ENCODE measurements at regions of chr9 and their contacts with region 1.

Region 1: DNA sequence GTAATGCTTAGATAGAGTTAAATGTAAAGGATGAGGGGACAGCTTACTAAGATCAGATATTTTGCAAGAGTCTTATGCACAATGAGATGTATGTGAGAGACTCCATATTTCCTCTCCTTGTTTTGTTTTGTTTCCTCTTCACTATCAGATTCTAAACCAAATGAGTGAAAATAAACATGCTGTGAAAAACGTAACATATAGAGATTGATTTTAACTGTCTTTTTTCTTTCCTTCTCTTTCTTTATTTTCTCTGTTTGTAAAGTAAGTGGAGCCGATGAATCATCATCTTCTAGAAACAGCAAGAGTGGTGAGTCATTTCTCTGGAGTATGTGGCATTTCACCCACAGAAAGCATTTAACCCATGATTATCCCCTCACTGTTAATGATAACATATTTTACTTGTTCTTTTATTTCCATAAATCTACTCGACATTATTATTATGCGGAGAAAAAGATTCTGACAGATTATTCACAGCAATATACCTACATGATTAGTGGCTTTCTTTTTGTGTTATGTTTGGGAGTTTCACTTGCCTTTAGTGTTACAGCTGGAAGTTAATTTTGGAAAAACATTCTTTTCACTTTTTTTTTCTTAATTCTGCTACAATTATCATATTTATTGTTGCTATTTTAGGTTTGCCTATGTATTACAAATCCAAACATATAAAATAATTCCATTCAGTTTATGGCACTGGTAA is 2.1 kb upstream of the ANXA1 start:
- DNase-seq: no peak
- H3K4me3 Mint-ChIP-seq: peak overlapping the region; percentile 20
- H3K27ac Mint-ChIP-seq: peak overlapping the region; percentile 76
- H3K4me1 Mint-ChIP-seq: peaks cover 63% of the 10 kb centered on the region
- H3K27me3 Mint-ChIP-seq: no peaks in the 10 kb centered on the region

Region 2: DNA sequence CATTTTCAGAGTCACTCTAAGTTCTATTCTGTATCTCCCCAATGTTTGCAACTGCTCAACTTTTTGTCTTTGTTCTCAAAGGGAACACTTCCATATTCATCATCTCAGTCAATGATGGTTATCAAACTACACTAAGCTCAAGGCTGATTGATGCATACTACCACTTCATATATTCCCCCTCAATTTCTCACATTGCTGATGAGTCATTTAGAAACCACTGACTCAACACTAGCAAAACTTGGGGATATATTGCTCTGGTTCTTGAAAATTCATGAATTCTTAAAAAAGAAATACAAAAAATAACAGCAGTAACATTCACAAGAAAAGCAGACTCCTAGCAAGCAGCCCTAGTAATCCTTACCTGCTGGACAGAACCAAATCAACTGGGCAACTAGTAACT is 1290.7 kb before region 1 on chr9:
- intact Hi-C with region 1: loop called (anchors 10 kb)
- DNase-seq: no peak
- H3K4me3 Mint-ChIP-seq: no peak overlapping the region
- H3K27ac Mint-ChIP-seq: peak overlapping the region; percentile 44
- H3K4me1 Mint-ChIP-seq: peaks cover 29% of the 10 kb centered on the region
- H3K27me3 Mint-ChIP-seq: no peaks in the 10 kb centered on the region

Region 3: GRCh38 chr9:72526901-72527800 is 622.4 kb before region 1 on chr9:
- intact Hi-C with region 1: loop called (anchors 10 kb)
- DNase-seq: peak; percentile 61
- H3K4me3 Mint-ChIP-seq: peak overlapping the region; percentile 72
- H3K27ac Mint-ChIP-seq: peak overlapping the region; percentile 94
- H3K4me1 Mint-ChIP-seq: peaks cover 43% of the 10 kb centered on the region
- H3K27me3 Mint-ChIP-seq: no peaks in the 10 kb centered on the region

Region 4: DNA sequence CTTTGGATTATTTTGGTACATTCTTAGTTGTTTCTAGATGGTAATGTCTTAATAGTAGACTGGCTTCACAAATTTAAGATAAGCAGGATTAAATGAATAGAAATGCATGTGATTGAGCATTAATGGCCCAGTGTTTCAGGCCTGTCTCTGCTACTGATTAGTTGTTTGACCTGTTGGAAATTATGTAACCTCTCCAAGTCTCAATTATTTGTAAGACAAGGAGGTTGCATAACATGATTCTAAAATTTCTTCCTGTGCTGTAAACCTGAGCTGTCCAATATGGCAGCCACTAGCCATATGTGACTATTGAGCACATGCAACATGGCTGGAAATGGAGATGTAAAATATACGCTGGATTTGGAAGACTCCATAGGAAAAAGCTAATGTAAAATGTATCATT is 294.2 kb before region 1 on chr9:
- intact Hi-C with region 1: no loop called
- DNase-seq: no peak
- H3K4me3 Mint-ChIP-seq: no peak overlapping the region
- H3K27ac Mint-ChIP-seq: no peak overlapping the region
- H3K4me1 Mint-ChIP-seq: no peaks in the 10 kb centered on the region
- H3K27me3 Mint-ChIP-seq: no peaks in the 10 kb centered on the region

Region 5: DNA sequence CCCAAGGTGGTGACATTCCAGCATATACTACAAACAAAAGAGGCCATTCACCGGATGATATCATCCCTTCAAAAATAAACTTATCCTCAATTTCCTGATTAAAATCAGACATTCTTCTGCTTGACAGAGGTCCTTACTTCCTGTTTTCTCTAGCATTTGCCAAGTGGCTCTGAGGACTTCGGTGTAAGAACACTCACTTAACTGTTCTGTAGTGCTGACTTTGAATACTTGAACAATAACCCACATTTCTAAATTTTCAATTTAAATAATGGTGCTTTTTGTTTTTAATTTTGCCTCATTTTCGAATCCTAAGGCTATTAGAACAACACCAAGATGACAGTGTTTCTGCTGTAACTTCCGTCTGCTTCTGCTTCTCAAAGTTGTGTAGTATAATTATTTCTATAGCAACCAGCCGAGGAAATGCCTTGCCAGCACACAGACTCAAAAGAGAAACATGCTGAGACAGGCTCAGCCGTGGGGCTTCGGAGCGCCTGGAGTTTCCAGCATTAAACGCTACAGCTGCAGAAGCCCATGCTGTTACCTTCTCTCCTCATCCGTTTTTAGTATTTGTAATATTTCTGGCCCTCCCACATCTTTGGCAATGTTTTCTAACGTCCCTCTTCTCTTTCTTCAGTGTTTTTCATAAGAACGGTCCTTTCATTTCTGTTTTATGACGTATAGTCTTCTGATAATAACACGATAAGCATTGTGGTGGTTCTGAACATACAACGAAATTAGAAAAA is 17.3 kb before region 1 on chr9:
- intact Hi-C with region 1: loop called (anchors 1 kb)
- DNase-seq: peak; percentile 71
- H3K4me3 Mint-ChIP-seq: peak overlapping the region; percentile 85
- H3K27ac Mint-ChIP-seq: peak overlapping the region; percentile 97
- H3K4me1 Mint-ChIP-seq: peaks cover 36% of the 10 kb centered on the region
- H3K27me3 Mint-ChIP-seq: no peaks in the 10 kb centered on the region

Region 6: DNA sequence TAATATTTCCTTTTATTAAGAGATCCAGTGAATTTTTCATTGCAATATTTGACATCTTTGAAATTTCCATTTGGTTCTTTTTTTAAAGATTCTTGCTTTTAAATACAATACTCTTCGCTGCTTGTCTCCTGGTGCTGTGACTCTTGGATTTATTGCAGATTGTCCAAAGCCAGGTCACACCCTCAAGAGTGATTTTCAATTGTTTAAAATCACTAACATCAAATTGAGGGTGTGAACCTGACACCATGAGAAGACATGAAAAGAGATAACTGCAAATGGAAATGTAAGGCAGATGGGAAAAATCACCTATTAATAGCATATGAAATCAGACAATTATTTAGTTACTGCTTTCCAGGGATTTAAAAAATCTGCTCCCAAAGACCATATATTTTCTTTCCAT is 44.8 kb after region 1 on chr9:
- intact Hi-C with region 1: no loop called
- DNase-seq: no peak
- H3K4me3 Mint-ChIP-seq: no peak overlapping the region
- H3K27ac Mint-ChIP-seq: no peak overlapping the region
- H3K4me1 Mint-ChIP-seq: no peaks in the 10 kb centered on the region
- H3K27me3 Mint-ChIP-seq: peaks cover 30% of the 10 kb centered on the region

Region 7: GRCh38 chr9:73219985-73220626 is 70.6 kb after region 1 on chr9:
- intact Hi-C with region 1: loop called (anchors 2 kb)
- DNase-seq: no peak
- H3K4me3 Mint-ChIP-seq: no peak overlapping the region
- H3K27ac Mint-ChIP-seq: peak overlapping the region; percentile 84
- H3K4me1 Mint-ChIP-seq: peaks cover 30% of the 10 kb centered on the region
- H3K27me3 Mint-ChIP-seq: peaks cover 19% of the 10 kb centered on the region

Measured in activated T-helper 2 cell treated with anti-CD3 and anti-CD28 coated beads, Interferon-gamma antibody, Interleukin-2, Interleukin-4, amounts not matched to agents 10 μg/mL and 5 μg/mL and 100 μg/mL, durations not matched to agents 14 hours and 24 hours and 36 hours (primary cell).